Calu3 (cell line): ENCODE measurements at regions of chr5 and their contacts with region 1.

Region 1: DNA sequence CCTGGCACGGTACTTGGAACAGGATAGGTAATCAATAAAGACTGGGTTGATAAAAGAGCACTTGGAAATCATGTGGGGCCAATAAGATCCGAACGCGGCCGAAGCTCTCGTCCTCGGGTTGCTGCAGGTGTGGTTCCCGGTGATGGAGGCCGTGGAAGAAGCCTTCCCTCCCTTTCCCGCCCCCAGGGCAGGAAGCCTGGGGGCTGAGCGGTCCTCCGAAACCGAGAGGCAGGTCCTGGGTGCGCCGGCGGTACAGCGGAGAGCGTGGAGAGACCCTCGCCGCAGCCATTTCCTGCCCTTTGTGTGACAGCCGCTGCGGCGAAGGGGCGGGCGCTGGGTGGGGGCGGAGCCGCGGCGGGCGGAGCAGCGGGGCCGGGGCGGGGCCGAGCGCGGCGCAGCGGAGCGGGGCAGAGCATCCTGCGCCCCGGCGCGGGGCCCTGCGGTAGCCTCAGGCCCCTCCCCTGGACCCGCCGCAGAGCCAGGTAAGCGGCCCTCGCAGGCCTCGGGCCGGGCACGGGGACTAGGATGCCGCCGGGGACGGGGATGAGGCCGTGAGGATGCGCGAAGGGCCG is at the start of gene CYFIP2:
- DNase-seq: peak; percentile 74
- H3K4me3 Mint-ChIP-seq: peak within 1 kb of the TSS; percentile 95
- H3K27ac Mint-ChIP-seq: peak within 1 kb of the TSS; percentile 22
- H3K4me1 Mint-ChIP-seq: peaks cover 15% of the 10 kb centered on the region
- H3K27me3 Mint-ChIP-seq: peaks cover 10% of the 10 kb centered on the region
- CTCF ChIP-seq: no peak
- total RNA-seq, gene CYFIP2: 37.8 and 38.8 TPM in 2 replicates

Region 2: DNA sequence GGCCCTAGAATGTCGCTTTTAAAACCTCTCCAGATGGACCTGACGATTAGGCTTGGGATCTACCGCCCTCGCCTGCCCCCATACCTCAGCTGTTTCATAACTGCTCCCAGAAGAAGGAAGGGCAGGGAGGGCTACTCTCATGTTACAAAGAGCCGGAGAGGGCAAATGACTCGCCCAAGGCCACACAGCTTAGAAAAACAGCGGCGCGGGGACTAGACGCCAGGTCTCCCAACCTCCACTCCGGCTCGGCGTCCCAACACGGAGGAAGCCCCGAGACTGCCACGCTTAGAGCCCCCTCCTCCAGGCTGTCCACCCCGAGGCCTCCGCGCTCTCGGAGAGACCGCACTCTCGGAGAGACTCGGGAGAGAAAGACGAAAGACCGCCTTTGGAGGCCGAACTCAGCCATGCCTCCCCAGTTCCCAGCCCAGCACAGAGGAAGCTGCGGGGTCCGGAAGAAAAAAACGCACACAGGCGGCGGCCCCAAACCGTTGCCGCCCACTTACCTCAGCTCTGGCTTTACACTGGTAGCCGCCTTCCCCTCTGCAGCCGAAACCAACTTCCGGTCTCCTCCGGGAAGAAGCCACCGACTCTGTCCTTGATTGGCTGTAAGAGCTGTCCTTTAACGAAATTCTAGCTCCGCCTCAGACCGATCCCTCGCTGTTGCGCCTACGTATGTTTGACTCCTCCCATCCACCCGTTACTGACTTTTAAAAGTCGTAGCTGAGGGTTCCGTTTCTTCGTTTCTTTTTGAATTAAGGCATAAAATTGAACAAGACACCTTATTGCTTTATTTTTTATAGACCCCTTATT is 123.3 kb before region 1 on chr5 and contains the start of gene MED7:
- CTCF ChIA-PET with region 1: no interaction called
- intact Hi-C with region 1: loop called (anchors 5 kb)
- DNase-seq: peak; percentile 95
- H3K4me3 Mint-ChIP-seq: peak within 1 kb of the TSS; percentile 92
- H3K27ac Mint-ChIP-seq: peak within 1 kb of the TSS; percentile 96
- H3K4me1 Mint-ChIP-seq: peaks cover 12% of the 10 kb centered on the region
- H3K27me3 Mint-ChIP-seq: no peaks in the 10 kb centered on the region
- CTCF ChIP-seq: no peak
- total RNA-seq, gene MED7: 21.2 and 24.1 TPM in 2 replicates

Region 3: GRCh38 chr5:157245477-157245876 is 20.3 kb before region 1 on chr5:
- CTCF ChIA-PET with region 1: interaction called, 11 read pairs
- intact Hi-C with region 1: no loop called
- DNase-seq: no peak
- H3K4me3 Mint-ChIP-seq: no peak overlapping the region
- H3K27ac Mint-ChIP-seq: no peak overlapping the region
- H3K4me1 Mint-ChIP-seq: no peaks in the 10 kb centered on the region
- H3K27me3 Mint-ChIP-seq: no peaks in the 10 kb centered on the region
- CTCF ChIP-seq: no peak

Region 4: GRCh38 chr5:157290981-157291711 is 25.3 kb after region 1 on chr5:
- CTCF ChIA-PET with region 1: no interaction called
- intact Hi-C with region 1: loop called (anchors 2 kb)
- DNase-seq: peak; percentile 86
- H3K4me3 Mint-ChIP-seq: peak overlapping the region; percentile 3
- H3K27ac Mint-ChIP-seq: peak overlapping the region; percentile 62
- H3K4me1 Mint-ChIP-seq: peaks cover 34% of the 10 kb centered on the region
- H3K27me3 Mint-ChIP-seq: no peaks in the 10 kb centered on the region
- CTCF ChIP-seq: no peak